ENCODE measurements at regions of chr11 and their contacts with region 1.

Region 1: DNA sequence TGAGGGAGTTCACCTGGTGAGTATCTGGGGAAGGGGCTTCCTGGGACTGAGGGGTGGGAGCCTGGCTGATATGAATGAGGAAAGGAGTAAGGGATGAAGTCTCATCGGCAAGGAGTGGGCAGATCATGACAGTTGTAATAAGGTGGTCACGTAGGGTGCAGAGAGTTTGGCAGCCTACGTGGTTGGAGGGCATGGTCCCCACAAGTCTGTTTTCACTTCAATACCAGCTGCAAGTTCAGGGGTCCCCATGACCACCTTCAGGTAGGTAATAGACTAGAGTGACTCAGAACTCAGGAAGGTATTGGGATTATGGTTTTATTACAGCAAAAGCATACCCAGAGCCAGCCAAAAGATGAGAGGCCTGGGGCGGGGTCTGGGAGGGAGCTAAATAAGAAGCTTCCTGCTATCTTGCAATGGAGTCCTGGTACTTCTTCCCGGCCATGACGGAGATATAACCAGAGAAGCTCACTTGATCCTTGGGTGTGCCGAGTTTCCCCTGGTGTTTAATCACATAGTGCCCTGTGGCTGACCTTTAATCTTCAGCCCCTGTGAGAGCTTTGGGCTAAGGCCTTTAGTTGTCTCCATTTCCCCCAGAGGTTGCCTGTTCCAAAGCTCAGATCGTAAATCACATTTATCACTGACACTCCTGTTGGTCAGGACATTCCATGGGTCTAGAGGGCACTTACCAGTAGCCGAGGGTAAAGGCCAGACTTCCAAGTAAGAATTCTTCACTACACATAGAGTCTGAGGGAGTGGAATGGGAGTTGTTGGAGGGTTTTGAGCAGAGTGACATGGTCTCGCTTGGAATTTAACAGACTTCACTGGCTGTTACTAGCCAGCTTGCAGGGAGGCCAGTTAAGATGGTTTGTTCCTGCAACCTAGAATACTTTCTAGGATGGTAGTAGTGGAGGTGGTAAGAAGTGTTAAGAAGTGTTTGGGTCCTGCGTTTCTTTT is 9.1 kb downstream of the SLC3A2 start:
- DNase-seq: no peak
- H3K4me3 ChIP-seq: no peak overlapping the region
- H3K27ac ChIP-seq: peak overlapping the region in 1 of 4 donors; percentile 16
- H3K4me1 ChIP-seq: peaks cover 0 to 28% (median 11%) of the 10 kb centered on the region in 4 donors
- H3K27me3 ChIP-seq: no peaks in the 10 kb centered on the region
- CTCF ChIP-seq: no peak
- EP300 ChIP-seq: no peak
- POLR2A ChIP-seq: no peak

Region 2: DNA sequence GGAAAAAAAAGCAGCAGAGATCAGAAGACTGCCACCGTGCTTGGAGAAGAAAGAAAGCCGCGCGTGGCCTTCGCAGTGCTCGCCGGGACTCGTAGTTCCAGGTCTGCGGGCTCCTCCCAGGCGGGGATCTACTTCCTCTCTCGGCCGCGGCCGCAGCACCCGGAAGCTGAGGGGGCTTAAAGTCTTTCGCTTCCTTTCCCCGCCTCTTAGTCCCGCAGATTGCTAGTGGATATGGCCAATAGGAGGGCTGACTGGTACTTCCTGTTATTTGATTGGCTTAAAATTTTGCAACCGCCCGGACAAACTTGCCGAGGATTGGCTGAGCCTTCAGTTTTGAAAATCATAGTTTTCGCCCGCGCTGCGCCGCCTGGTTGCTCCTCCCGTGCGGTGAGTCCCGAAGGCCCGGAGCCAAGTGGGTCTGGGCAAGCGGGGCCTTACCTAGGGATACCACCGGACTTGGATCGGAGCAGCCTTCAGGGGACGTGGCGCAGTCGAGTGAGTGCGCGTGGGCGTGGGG is 766.0 kb before region 1 on chr11 and contains the start of gene INCENP:
- intact Hi-C with region 1: loop called (anchors 10 kb)
- DNase-seq: peak; percentile 98
- H3K4me3 ChIP-seq: peak within 1 kb of the TSS; percentile 87 to 97 (median 93)
- H3K27ac ChIP-seq: peak within 1 kb of the TSS; percentile 72 to 79 (median 76)
- H3K4me1 ChIP-seq: peaks cover 0 to 23% (median 12%) of the 10 kb centered on the region in 4 donors
- H3K27me3 ChIP-seq: no peaks in the 10 kb centered on the region
- CTCF ChIP-seq: no peak
- EP300 ChIP-seq: no peak
- POLR2A ChIP-seq: no peak
- total RNA-seq, gene INCENP: 5.4 to 25.3 (median 8.9) TPM